ENCODE measurements at regions of chr7 and their contacts with region 1.

Region 1: GRCh38 chr7:84149573-84149972 is 45.0 kb downstream of the SEMA3A start:
- DNase-seq: no peak
- H3K4me3 Mint-ChIP-seq: no peak overlapping the region
- H3K27ac Mint-ChIP-seq: no peak overlapping the region
- H3K4me1 Mint-ChIP-seq: peaks cover 22% of the 10 kb centered on the region
- H3K27me3 Mint-ChIP-seq: no peaks in the 10 kb centered on the region
- CTCF ChIP-seq: no peak

Region 2: DNA sequence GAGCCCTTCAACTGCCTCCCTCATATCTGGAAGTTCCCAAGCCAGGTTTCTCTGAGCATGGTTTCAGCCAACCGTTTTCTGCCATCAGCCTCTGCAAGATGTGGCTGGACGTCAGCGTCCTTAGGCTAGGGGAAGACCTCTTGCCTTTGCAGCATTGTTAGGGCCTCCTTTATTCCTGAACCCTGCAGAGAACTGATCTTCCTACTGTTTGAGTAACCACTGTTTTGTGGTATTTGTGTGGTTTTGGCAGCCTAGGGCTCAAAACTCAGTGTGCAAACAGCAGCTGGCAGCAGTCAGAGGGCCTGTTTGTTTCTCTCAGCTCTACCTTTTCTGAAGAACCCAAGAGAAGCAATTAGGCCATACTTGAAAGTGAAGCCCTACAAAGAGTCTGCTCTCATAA is 417.3 kb before region 1 on chr7:
- CTCF ChIA-PET with region 1: no interaction called
- intact Hi-C with region 1: no loop called
- DNase-seq: no peak
- H3K4me3 Mint-ChIP-seq: no peak overlapping the region
- H3K27ac Mint-ChIP-seq: no peak overlapping the region
- H3K4me1 Mint-ChIP-seq: no peaks in the 10 kb centered on the region
- H3K27me3 Mint-ChIP-seq: no peaks in the 10 kb centered on the region
- CTCF ChIP-seq: no peak

Region 3: GRCh38 chr7:84176716-84177115 is 27.1 kb after region 1 on chr7:
- CTCF ChIA-PET with region 1: no interaction called
- intact Hi-C with region 1: no loop called
- DNase-seq: no peak
- H3K4me3 Mint-ChIP-seq: no peak overlapping the region
- H3K27ac Mint-ChIP-seq: no peak overlapping the region
- H3K4me1 Mint-ChIP-seq: no peaks in the 10 kb centered on the region
- H3K27me3 Mint-ChIP-seq: no peaks in the 10 kb centered on the region
- CTCF ChIP-seq: no peak

Region 4: GRCh38 chr7:84188786-84189405 is 39.3 kb after region 1 on chr7:
- CTCF ChIA-PET with region 1: no interaction called
- intact Hi-C with region 1: loop called (anchors 2 kb)
- DNase-seq: no peak
- H3K4me3 Mint-ChIP-seq: no peak overlapping the region
- H3K27ac Mint-ChIP-seq: no peak overlapping the region
- H3K4me1 Mint-ChIP-seq: peaks cover 11% of the 10 kb centered on the region
- H3K27me3 Mint-ChIP-seq: no peaks in the 10 kb centered on the region
- CTCF ChIP-seq: no peak

Measured in Calu3 (cell line).